ENCODE measurements at regions of chr3 and their contacts with region 1.

Region 1: GRCh38 chr3:126573181-126574117 is 14.7 kb upstream of the C3orf22 start:
- DNase-seq: no peak
- ATAC-seq: peak; percentile 81
- H3K4me3 ChIP-seq: peak overlapping the region; percentile 21 to 44; a peak in 3 of 4 replicates
- H3K27ac ChIP-seq: no peak overlapping the region
- H3K4me1 ChIP-seq: no peaks in the 10 kb centered on the region
- H3K27me3 ChIP-seq: peaks cover 18% of the 10 kb centered on the region
- CTCF ChIP-seq: no peak

Region 2: GRCh38 chr3:126287536-126288241 is 285.8 kb before region 1 on chr3:
- CTCF ChIA-PET with region 1: no interaction called
- POLR2A ChIA-PET with region 1: no interaction called
- in situ Hi-C with region 1: no loop called
- intact Hi-C with region 1: no loop called
- DNase-seq: no peak
- ATAC-seq: peak; percentile 82
- H3K4me3 ChIP-seq: peak overlapping the region; percentile 21 to 32
- H3K27ac ChIP-seq: no peak overlapping the region
- H3K4me1 ChIP-seq: peaks cover 12% of the 10 kb centered on the region; the same call in 1 of the 2 replicates
- H3K27me3 ChIP-seq: peaks cover 11% of the 10 kb centered on the region
- CTCF ChIP-seq: no peak

Region 3: GRCh38 chr3:126548556-126549466 is 24.6 kb before region 1 on chr3:
- CTCF ChIA-PET with region 1: no interaction called
- POLR2A ChIA-PET with region 1: no interaction called
- in situ Hi-C with region 1: no loop called
- intact Hi-C with region 1: loop called (anchors 1 kb)
- DNase-seq: no peak
- ATAC-seq: peak; percentile 17; the same call in 1 of the 2 replicates
- H3K4me3 ChIP-seq: no peak overlapping the region
- H3K27ac ChIP-seq: no peak overlapping the region
- H3K4me1 ChIP-seq: no peaks in the 10 kb centered on the region
- H3K27me3 ChIP-seq: no peaks in the 10 kb centered on the region; the same call in 1 of the 2 replicates
- CTCF ChIP-seq: no peak

Region 4: GRCh38 chr3:127524300-127524896 is 950.9 kb after region 1 on chr3:
- CTCF ChIA-PET with region 1: interaction called, 10 read pairs
- POLR2A ChIA-PET with region 1: no interaction called
- in situ Hi-C with region 1: no loop called
- intact Hi-C with region 1: no loop called
- DNase-seq: no peak
- ATAC-seq: no peak
- H3K4me3 ChIP-seq: no peak overlapping the region
- H3K27ac ChIP-seq: no peak overlapping the region
- H3K4me1 ChIP-seq: no peaks in the 10 kb centered on the region
- H3K27me3 ChIP-seq: 0 out of 2 replicates have a peak, but pooled peaks cover 2% of the 10 kb centered on the region
- CTCF ChIP-seq: no peak